Vagina (tissue), 2 donors: ENCODE measurements at regions of chr10 and their contacts with region 1.

Region 1: GRCh38 chr10:89426230-89426868 is 12.0 kb downstream of the IFIT5 start:
- DNase-seq: no peak
- H3K4me3 ChIP-seq: no peak overlapping the region
- H3K27ac ChIP-seq: no peak overlapping the region
- H3K4me1 ChIP-seq: no peaks in the 10 kb centered on the region
- H3K27me3 ChIP-seq: no peaks in the 10 kb centered on the region
- CTCF ChIP-seq: peak; percentile 55 to 83 (median 75)
- POLR2A ChIP-seq: no peak

Region 2: DNA sequence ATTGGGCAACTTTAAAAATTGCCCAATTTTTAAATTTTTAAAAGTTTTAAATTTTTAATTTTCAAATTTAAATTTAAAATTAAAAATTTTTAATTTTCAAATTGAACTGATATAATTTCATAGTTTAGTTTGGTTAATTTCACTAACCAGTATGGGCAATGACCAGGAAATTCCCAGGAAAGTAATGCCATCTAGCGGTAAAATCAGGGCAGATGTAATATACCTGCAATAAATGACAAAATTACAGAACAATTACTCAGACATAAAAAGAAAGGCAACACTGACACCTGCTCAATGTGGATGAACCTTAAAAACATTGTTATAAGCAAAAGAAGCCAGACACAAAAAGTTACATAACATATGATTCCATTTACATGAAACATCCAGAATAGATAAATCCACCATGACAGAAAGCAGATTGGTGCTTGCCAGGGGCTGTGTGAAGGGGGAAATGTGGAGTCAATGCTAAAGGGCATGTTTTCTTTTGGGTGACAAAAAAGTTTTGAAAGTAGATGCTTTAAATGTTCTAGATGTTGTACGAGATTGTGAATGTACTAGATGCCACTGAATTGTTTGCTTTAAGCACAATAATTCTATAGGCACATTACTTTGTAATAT is 137.6 kb after region 1 on chr10:
- intact Hi-C with region 1: loop called (anchors 2 kb)
- DNase-seq: no peak
- H3K4me3 ChIP-seq: no peak overlapping the region
- H3K27ac ChIP-seq: no peak overlapping the region
- H3K4me1 ChIP-seq: no peaks in the 10 kb centered on the region
- H3K27me3 ChIP-seq: no peaks in the 10 kb centered on the region
- CTCF ChIP-seq: peak; percentile 52 to 78 (median 67)
- POLR2A ChIP-seq: no peak